ENCODE measurements at regions of chr17 and their contacts with region 1.

Region 1: DNA sequence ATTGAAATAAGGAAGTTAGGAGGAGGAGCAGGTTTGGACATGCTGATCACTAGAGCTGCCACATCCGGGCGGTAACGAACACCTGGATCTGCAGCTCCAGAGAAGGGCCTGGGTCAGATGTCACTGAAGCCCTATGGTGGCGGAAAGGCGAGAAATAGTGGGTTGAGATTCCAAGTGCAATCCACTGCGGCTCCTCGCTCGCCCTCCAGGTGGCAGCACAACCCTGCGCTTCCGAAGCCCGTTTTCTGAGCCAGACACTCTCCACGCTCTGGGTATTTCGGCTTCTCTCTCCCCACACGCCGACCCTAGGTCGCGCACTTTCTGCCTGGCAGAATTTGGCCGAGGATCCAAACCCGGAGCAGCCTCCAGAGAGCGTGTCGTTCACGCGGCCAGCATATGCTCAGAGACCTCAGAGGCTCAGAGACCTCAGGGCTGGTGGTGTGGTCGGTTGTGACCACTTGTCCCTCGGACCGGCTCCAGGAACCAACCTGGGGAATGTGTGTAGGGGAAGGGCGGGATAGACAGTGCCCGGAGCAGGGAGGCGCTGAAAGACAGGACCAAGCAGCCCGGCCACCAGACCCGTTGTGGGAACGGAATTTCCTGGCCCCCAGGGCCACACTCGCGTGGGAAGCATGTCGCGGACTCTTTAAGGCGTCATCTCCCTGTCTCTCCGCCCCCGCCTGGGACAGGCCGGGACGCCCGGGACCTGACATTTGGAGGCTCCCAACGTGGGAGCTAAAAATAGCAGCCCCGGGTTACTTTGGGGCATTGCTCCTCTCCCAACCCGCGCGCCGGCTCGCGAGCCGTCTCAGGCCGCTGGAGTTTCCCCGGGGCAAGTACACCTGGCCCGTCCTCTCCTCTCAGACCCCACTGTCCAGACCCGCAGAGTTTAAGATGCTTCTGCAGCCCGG is 744 bp upstream of the SLC2A4 start:
- DNase-seq: peak; percentile 82
- ATAC-seq: peak; percentile 83
- H3K4me3 Mint-ChIP-seq: peak overlapping the region; percentile 82
- H3K27ac Mint-ChIP-seq: peak overlapping the region; percentile 77
- H3K4me1 Mint-ChIP-seq: peaks cover 14% of the 10 kb centered on the region
- H3K27me3 Mint-ChIP-seq: peaks cover 12% of the 10 kb centered on the region
- CTCF ChIP-seq: peak; percentile 42

Region 2: GRCh38 chr17:7252176-7253043 is 28.4 kb before region 1 on chr17 and contains the start of gene ELP5:
- CTCF ChIA-PET with region 1: no interaction called
- POLR2A ChIA-PET with region 1: no interaction called
- intact Hi-C with region 1: loop called (anchors 1 kb)
- DNase-seq: no peak
- ATAC-seq: peak; percentile 61
- H3K4me3 Mint-ChIP-seq: peak within 1 kb of the TSS; percentile 98
- H3K27ac Mint-ChIP-seq: peak within 1 kb of the TSS; percentile 100
- H3K4me1 Mint-ChIP-seq: peaks cover 44% of the 10 kb centered on the region
- H3K27me3 Mint-ChIP-seq: no peaks in the 10 kb centered on the region
- CTCF ChIP-seq: no peak
- total RNA-seq, gene ELP5: 49.2 and 53.6 TPM in 2 replicates

Region 3: DNA sequence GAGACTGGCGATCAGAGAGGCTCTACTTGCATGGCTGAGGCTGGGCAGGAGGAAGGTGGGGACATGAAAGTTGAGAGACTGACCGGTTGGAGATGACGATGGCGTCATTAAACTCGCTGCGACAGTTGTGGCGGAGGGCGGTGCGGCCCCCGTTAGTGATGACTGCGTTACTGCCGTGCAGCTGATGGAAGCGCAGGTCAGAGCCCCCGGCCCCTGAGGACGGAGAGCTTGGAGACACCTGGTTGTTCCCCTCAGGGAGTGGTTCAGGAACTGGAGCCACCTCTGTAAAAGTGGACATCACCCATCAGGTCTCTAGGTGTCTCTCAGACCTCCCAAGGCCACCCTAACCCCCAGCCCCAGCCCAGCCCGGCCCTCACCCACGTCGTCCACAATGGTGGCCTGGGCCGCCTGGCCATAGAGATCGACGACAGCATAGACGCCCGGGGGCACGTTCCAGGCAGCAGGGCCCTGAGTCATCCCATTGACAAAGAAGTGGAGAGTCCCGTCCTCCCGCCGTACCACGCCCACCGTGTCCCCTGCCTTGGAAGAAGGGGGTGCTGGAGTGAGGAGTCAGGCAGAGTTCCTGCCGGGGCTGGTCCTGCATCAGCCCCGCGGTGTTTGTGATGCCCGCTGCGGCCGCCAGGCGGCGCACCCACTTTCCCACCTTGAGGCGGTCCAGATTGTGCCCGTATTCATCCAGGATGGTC is 43.1 kb after region 1 on chr17:
- CTCF ChIA-PET with region 1: no interaction called
- POLR2A ChIA-PET with region 1: interaction called, 8 read pairs
- intact Hi-C with region 1: loop called (anchors 1 kb)
- DNase-seq: peak; percentile 62
- ATAC-seq: peak; percentile 41
- H3K4me3 Mint-ChIP-seq: no peak overlapping the region
- H3K27ac Mint-ChIP-seq: no peak overlapping the region
- H3K4me1 Mint-ChIP-seq: peaks cover 15% of the 10 kb centered on the region
- H3K27me3 Mint-ChIP-seq: no peaks in the 10 kb centered on the region
- CTCF ChIP-seq: peak; percentile 64

Region 4: DNA sequence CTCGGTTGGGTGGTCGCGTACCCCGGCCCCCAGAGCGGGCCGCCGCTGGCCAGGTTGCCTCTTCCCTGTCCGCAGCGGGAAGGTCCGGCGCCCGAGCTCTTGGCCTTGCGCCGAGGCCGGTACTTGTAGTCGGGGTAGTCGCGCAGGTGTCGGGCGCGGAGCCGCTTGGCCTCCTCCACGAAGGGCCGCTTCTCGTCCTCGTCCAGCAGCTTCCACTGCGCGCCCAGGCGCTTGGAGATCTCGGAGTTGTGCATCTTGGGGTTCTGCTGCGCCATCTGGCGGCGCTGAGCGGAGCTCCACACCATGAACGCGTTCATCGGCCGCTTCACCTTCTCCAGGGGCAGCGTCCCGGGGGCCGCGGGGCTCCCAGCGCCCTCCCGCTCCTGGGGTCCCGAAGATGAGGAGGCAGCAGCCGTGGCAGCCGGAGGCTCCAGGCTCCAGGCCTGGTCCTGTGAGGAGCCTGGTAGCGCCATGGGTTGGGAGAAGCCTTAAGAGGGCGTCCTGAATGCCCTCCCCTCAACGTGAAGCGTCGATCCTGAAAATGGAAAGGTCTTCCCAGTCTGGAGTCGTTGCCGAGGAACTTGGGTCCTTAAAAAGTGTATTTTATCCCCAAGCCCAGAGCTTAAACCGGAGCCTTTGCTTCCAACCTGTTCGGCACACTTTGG is 308.6 kb after region 1 on chr17:
- CTCF ChIA-PET with region 1: no interaction called
- POLR2A ChIA-PET with region 1: interaction called, 4 read pairs
- intact Hi-C with region 1: loop called (anchors 1 kb)
- DNase-seq: peak; percentile 66
- ATAC-seq: peak; percentile 89
- H3K4me3 Mint-ChIP-seq: no peak overlapping the region
- H3K27ac Mint-ChIP-seq: no peak overlapping the region
- H3K4me1 Mint-ChIP-seq: peaks cover 13% of the 10 kb centered on the region
- H3K27me3 Mint-ChIP-seq: no peaks in the 10 kb centered on the region
- CTCF ChIP-seq: peak; percentile 44

Region 5: DNA sequence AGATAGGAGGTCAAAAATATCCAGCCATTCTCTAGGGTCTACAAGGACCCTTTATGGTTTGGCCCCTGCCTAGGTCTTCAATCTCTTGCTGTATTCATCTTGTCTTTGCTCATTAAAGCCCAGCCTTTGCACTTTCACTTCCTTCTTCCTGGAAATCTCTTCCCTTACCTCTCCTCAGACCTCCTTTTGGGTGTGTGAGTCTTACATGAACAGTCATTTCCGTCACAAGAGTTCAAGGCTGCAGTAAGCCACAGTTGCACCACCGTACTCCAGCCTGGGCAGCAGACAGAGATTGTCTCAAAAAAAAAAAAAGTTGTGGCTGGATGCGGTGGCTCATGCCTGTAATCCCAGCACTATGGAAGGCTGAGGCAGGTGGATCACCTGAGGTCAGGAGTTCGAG is 364.0 kb after region 1 on chr17:
- CTCF ChIA-PET with region 1: no interaction called
- POLR2A ChIA-PET with region 1: no interaction called
- intact Hi-C with region 1: no loop called
- DNase-seq: no peak
- ATAC-seq: peak; percentile 49
- H3K4me3 Mint-ChIP-seq: no peak overlapping the region
- H3K27ac Mint-ChIP-seq: no peak overlapping the region
- H3K4me1 Mint-ChIP-seq: peaks cover 6% of the 10 kb centered on the region
- H3K27me3 Mint-ChIP-seq: peaks cover 23% of the 10 kb centered on the region
- CTCF ChIP-seq: no peak